Dorsolateral prefrontal cortex (tissue), 120 donors: ENCODE measurements at regions of chr3 and their contacts with region 1.

Region 1: GRCh38 chr3:128680602-128681368 is 30.2 kb upstream of the RPN1 start:
- DNase-seq: peak; percentile 97 to 100 (median 98)
- H3K4me3 ChIP-seq: peak overlapping the region; percentile 53 to 95 (median 76)
- H3K27ac ChIP-seq: peak overlapping the region; percentile 86 to 100 (median 98)
- H3K27me3 ChIP-seq: no peaks in the 10 kb centered on the region
- CTCF ChIP-seq: peak; percentile 82 to 99 (median 97)

Region 2: GRCh38 chr3:128367753-128368152 is 313.0 kb before region 1 on chr3:
- intact Hi-C with region 1: no loop called
- DNase-seq: no peak
- H3K4me3 ChIP-seq: no peak overlapping the region
- H3K27ac ChIP-seq: no peak overlapping the region
- H3K27me3 ChIP-seq: no peaks in the 10 kb centered on the region
- CTCF ChIP-seq: no peak

Region 3: GRCh38 chr3:128456776-128457715 is 223.7 kb before region 1 on chr3:
- intact Hi-C with region 1: no loop called
- DNase-seq: no peak
- H3K4me3 ChIP-seq: no peak overlapping the region
- H3K27ac ChIP-seq: no peak overlapping the region
- H3K27me3 ChIP-seq: peaks cover 0 to 33% (median 4%) of the 10 kb centered on the region in 45 donors
- CTCF ChIP-seq: no peak

Region 4: DNA sequence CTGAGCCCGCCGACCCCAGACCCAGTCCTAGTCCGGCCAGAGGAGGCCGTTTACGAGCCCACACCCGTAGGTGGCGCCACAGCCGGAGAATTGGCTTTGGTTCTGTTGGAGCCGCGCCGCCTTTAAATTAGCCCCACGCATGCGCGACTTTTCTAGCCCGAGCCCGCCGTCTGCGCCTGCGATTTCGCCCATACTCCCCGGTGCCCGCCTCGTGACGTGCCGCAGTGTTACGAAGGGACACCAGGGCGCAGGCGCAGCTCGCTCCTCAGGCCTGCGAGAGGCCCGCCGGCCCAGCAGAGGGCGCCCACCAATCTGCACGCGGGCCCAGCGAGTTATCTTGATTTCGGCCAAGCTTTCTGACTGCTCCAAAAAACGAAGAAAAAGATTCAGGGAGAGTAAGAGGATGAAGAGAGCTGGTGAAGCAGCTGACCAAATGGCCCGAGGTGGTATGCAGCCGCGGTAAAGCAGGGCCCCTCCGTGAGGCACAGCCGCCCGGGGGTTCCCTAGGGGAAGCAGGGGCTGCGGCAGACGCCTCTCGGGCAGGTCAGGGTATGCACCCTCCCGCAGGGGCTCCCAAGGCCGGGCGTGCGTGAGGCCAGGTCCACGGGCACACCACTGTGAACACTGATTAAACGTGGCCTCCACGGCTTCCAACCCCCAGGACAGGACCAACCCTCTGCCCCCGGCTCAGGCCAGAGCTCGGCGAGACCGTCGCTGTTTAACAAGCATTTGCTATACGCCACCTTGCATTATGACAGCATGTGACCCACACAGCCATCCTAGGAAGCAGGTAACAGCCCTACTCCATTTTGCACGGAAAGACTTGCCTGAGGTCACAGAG is 63.0 kb before region 1 on chr3:
- intact Hi-C with region 1: loop called (anchors 2 kb)
- DNase-seq: peak; percentile 93 to 97 (median 96)
- H3K4me3 ChIP-seq: peak overlapping the region; percentile 66 to 99 (median 93)
- H3K27ac ChIP-seq: peak overlapping the region; percentile 27 to 99 (median 93)
- H3K27me3 ChIP-seq: no peaks in the 10 kb centered on the region
- CTCF ChIP-seq: peak in 55 of 56 donors; percentile 90 to 100 (median 98)

Region 5: DNA sequence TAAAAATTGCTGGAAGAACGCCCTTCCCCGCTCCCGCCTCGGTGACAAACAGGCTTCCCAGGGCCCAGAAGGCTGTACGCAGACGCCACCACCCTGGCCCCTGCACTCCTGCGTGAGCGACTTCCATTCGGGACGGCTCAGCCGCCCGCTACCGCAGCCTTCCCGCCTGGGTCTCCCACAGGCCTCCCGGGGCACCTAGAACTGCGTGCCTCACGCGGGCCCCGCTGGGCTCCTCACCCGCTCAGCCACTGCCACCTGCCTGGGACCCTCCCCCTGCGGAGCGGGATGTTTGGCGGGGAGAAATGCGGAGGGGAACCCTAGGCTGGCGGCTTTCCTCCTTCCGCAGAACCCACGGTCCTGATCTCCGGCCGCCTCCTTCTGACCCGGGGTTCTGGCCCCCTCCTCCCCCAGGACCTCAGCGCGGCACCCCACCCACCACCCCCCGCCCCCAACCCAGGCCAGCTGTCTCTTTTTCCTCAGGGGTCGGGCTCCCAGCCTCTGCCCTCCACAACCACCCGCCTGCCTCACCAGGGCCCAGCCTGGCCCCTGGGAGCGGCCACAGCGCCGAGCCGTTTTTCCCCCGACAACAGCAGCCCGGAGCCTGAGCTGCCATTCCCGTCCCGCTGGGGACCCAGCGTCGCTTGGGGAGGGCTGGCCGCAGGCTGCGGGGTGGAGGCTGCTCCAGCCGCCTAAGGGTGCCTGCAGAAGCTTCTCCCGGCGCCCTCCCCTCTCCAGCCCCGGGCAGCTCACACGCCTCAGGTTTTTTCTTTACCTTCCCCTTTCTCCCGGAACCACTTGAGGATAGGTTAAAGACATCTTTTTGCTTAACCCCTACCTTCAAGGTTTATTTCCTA is 17.7 kb after region 1 on chr3:
- intact Hi-C with region 1: loop called in 1 of 2 experiments (anchors 1 kb)
- DNase-seq: peak in 7 of 10 donors; percentile 36 to 65 (median 48)
- H3K4me3 ChIP-seq: peak overlapping the region; percentile 41 to 85 (median 67)
- H3K27ac ChIP-seq: peak overlapping the region in 57 of 59 donors; percentile 27 to 92 (median 77)
- H3K27me3 ChIP-seq: no peaks in the 10 kb centered on the region
- CTCF ChIP-seq: no peak

Region 6: GRCh38 chr3:128794770-128795649 is 114.2 kb after region 1 on chr3:
- intact Hi-C with region 1: loop called (anchors 1 to 5 kb)
- DNase-seq: peak in 5 of 10 donors; percentile 38 to 52 (median 51)
- H3K4me3 ChIP-seq: peak overlapping the region in 1 of 59 donors; percentile 22
- H3K27ac ChIP-seq: peak overlapping the region in 56 of 59 donors; percentile 4 to 82 (median 49)
- H3K27me3 ChIP-seq: no peaks in the 10 kb centered on the region
- CTCF ChIP-seq: peak; percentile 57 to 91 (median 81)

Region 7: DNA sequence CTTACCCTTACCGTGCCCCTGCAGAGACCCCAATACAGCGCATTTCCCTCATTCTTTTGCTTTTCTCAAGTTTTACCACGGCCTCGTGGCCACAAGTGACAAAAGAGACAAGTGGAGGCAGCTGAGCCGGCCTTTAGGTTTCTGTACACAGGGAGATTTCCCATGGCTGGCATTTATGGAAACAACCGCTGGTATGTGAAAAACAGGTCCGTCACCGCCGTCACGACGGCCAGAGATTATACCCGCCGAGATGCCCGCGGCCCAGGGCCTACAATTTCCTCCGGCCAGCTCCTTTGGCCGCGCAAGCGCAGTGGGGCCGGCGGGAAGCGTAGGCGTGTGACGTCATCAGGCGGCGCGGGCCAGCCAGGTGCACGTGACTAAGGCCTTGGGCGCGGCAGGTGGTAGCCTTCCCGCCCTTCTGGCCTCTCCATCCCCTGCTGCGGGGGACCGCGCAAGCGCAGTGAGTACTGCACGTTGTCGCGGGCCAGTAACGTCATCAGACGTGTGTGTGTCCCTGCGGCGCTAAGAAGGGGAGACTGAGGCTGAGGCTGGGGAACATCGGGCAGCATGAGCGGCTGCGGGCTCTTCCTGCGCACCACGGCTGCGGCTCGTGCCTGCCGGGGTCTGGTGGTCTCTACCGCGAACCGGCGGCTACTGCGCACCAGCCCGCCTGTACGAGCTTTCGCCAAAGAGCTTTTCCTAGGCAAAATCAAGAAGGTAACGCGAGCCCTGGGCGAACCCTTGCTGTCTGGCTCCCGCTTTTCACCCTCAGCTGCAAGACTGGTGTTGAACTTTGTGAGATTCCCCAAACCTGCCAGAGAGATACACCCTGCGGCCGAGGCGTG is 198.6 kb after region 1 on chr3 and contains the start of gene ACAD9:
- intact Hi-C with region 1: loop called (anchors 1 to 2 kb)
- DNase-seq: peak; percentile 94 to 99 (median 97)
- H3K4me3 ChIP-seq: peak within 1 kb of the TSS; percentile 67 to 99 (median 85)
- H3K27ac ChIP-seq: peak within 1 kb of the TSS; percentile 73 to 97 (median 92)
- H3K27me3 ChIP-seq: no peaks in the 10 kb centered on the region
- CTCF ChIP-seq: peak in 40 of 56 donors; percentile 5 to 64 (median 26)
- total RNA-seq, gene ACAD9: 36.3 to 64.1 (median 51.0) TPM